ENCODE measurements at regions of chr4 and their contacts with region 1.

Region 1: DNA sequence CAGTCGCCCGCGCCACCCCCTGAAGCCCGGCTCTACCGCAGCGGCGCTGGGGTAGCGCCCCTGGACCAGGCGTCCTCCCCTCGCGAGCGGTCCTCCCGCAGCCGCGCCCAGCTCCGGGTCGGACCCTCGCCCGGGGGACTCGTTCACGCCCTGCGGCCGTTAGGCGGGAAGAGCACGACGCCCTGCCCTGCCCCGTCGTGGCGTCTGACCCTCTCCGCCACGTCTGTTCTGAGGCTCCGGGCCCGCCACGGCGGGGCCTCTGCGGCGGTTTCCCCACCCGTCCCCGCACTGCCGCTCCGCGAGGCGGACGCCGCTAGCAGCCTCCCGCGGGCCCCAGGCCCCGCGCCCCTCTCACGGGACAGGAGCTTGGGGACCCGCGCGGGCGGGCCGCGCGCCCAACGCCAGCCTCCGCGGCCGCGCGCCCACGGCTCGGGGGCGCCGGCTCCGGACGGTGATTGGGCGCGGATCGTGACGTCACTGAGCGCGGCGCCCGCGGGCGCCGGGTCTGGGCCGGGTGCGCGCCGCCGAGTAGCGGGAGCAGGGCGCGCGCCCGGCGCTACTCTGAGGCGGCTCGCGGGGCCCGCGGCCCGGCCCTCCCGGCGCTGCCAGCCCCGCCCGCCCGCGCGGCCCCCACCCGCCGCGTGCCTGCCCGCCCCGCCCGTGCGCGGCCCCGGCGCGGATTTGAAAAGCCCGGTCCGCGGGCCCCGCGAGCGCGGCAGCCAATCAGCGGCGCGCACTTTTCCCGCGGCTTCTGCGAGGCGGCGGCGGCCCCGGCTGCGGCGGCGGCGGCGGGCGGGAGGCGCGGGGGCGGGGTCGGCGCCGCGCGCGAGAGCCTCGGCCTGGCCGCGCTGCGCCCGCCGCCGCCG is at the start of gene NSD2:
- DNase-seq: peak; percentile 90
- H3K4me3 Mint-ChIP-seq: peak within 1 kb of the TSS; percentile 92
- H3K27ac Mint-ChIP-seq: peak within 1 kb of the TSS; percentile 96
- H3K4me1 Mint-ChIP-seq: peaks cover 35% of the 10 kb centered on the region
- H3K27me3 Mint-ChIP-seq: no peaks in the 10 kb centered on the region
- total RNA-seq, gene NSD2: 246 to 250 TPM

Region 2: GRCh38 chr4:1200425-1201035 is 670.3 kb before region 1 on chr4:
- CTCF ChIA-PET with region 1: no interaction called
- intact Hi-C with region 1: loop called (anchors 5 kb)
- DNase-seq: no peak
- H3K4me3 Mint-ChIP-seq: peak overlapping the region; percentile 60
- H3K27ac Mint-ChIP-seq: no peak overlapping the region
- H3K4me1 Mint-ChIP-seq: peaks cover 19% of the 10 kb centered on the region
- H3K27me3 Mint-ChIP-seq: no peaks in the 10 kb centered on the region

Region 3: DNA sequence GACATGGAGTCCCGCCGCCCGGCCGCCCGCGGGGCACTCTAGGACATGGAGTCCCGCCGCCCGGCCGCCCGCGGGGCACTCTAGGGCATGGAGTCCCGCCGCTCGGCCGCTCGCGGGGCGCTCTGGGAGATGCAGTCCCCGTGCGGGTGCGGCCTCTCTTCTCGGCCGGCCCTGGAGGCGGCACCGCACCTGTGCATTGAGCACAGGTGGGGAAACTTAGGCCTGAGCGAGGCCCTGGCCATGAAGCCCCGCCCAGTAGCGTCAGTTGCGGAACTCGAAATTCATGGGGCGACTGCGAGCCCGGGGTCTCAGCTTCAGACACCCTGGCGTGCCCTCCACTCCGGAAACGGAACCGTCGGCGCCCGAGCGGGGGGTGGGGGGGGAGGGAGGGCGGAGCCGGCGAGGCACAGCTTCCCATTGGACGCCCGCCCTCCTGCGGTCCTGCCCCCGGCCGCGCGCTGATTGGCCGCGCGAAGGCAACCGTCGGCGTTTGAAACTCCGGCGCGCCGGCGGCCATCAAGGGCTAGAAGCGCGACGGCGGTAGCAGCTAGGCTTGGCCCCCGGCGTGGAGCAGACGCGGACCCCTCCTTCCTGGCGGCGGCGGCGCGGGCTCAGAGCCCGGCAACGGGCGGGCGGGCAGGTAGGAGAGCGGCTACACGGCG is 149.7 kb before region 1 on chr4 and contains the starts of genes TACC3 and TMEM129:
- CTCF ChIA-PET with region 1: no interaction called
- intact Hi-C with region 1: loop called (anchors 1 kb)
- DNase-seq: peak; percentile 96
- H3K4me3 Mint-ChIP-seq: peak within 1 kb of the TSS; percentile 94
- H3K27ac Mint-ChIP-seq: peak within 1 kb of the TSS; percentile 98
- H3K4me1 Mint-ChIP-seq: peaks cover 53% of the 10 kb centered on the region
- H3K27me3 Mint-ChIP-seq: no peaks in the 10 kb centered on the region
- total RNA-seq, gene TACC3: 246 to 264 TPM
- total RNA-seq, gene TMEM129: 19.0 to 19.8 TPM

Region 4: DNA sequence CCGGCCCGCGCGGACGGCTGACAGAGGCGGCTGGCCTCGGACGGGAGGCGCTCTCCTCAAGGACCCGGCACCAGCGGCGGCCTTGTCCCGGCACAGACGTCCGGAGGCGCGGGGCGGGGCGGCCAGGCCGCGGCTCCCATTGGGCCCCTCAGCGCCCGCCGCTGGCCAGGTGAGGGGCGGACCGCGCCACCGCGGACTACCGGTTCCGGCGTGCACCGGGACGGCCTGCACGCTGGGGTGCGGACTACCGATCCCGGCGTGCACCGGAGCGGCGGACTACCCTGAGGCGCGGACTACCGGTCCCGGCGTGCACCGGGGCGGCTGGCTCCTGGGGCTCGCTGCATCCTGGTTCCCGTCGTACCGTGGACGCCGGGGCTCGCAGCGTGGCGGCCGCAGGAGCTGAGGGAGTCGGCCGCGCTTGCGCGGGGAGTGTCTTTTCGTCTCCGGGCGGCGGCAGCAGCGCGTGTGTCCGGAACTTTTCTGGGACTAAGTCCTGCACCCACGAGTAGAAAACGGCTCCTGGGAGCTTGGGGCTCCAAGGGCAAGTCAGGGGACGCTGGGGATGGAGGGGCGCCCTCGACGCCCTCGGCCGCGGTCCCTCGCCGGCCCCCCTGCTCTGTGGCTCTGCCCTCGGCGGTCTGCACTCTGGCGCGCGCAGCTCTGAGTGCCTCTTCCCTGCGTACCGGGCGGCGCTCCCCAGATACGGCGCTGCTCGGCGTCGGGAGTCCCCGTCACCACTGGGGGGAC is 14.6 kb before region 1 on chr4 and contains the start of gene LETM1:
- CTCF ChIA-PET with region 1: interaction called, 4 read pairs
- intact Hi-C with region 1: loop called (anchors 1 kb)
- DNase-seq: peak; percentile 95
- H3K4me3 Mint-ChIP-seq: peak within 1 kb of the TSS; percentile 79
- H3K27ac Mint-ChIP-seq: no peak within 1 kb of the TSS
- H3K4me1 Mint-ChIP-seq: peaks cover 38% of the 10 kb centered on the region
- H3K27me3 Mint-ChIP-seq: no peaks in the 10 kb centered on the region
- total RNA-seq, gene LETM1: 36.3 to 40.5 TPM

Measured in activated naive CD4-positive, alpha-beta T cell treated with anti-CD3 and anti-CD28 coated beads for 36 hours (primary cell).